ENCODE measurements at regions of chr1 and their contacts with region 1.

Region 1: DNA sequence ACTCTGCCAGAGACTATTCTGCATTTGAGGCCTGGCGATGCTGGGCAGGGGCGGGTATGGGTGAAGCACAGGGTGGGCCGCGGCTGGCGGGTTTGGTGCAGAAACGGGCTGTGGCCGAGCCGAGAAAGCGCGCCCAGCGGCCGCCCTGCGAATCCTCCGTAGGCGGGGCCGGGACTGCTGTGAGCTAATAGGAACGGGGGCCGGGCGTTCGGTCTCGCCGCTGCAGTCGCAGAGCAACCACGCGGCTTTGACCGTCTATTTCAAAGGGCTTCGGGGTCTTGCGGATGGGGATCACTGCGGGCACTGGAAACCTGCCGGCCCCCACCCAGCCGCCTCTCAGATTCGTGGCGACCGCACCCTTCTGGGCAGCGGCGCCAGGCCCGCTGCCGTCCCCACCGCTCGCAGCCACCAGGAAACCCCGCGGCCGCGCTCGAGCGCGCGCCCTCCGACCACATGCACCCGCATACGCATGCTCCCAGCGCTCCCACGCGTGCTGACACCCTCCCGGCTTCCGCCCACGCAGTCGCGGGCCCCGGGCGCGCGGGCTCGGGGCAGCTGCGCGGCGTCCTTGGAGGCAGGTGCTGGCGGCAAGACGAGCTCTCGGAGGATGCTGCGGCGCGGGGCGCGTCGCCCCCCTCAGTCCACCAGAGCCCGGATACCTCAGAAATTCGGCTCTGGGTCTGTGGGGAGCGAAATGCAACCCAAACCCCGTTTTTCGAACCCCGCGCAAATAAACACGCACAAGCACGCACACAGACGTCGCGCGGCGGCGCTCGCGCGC is 32.6 kb downstream of the DNTTIP2 start:
- DNase-seq: peak; percentile 79
- H3K4me3 Mint-ChIP-seq: peak overlapping the region; percentile 83
- H3K27ac Mint-ChIP-seq: peak overlapping the region; percentile 83
- H3K4me1 Mint-ChIP-seq: peaks cover 23% of the 10 kb centered on the region
- H3K27me3 Mint-ChIP-seq: no peaks in the 10 kb centered on the region

Region 2: DNA sequence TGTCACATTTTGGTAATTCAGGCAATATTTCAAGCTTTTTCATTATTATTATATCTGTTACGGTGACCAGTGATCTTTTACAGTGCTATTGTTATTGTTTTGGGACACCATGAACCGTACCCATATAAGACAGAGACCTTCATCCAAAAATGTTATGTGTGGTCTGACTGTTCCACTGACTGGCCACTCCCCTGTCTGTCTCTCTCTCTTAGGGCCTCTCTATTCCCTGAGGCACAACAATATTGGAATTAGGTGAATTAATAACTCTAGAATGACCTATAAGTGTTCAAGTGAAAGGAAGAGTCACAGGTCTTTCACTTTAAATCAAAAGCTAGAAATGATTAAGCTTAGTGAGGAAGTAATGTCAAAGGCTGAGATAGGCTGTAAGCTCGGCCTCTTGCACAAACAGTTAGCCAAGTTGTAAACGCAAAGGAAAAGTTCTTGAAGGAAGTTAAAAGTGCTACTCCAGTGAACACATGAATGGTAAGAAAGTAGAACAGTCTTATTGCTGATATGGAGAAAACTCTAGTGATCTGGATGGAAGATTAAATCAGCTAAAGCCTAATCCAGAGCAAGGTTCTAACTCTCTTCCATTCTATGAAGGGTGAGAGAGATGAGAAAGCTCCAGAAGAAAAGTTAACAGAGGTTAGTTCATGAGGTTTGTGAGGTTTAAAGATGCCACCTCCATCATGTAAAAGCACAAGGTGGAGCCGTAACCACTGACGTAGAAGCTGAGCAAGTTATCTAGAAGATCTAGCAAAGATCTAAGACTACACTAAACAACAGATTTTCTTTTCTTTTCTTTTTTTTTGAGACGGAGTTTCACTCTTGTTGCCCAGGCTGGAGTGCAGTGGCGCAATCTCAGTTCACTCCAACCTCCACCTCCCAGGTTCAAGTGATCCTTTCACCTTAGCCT is 865.4 kb before region 1 on chr1:
- intact Hi-C with region 1: loop called (anchors 10 kb)
- DNase-seq: peak; percentile 45
- H3K4me3 Mint-ChIP-seq: peak overlapping the region; percentile 41
- H3K27ac Mint-ChIP-seq: peak overlapping the region; percentile 98
- H3K4me1 Mint-ChIP-seq: peaks cover 55% of the 10 kb centered on the region
- H3K27me3 Mint-ChIP-seq: no peaks in the 10 kb centered on the region

Region 3: GRCh38 chr1:93033785-93034184 is 812.6 kb before region 1 on chr1:
- intact Hi-C with region 1: no loop called
- DNase-seq: no peak
- H3K4me3 Mint-ChIP-seq: no peak overlapping the region
- H3K27ac Mint-ChIP-seq: no peak overlapping the region
- H3K4me1 Mint-ChIP-seq: peaks cover 34% of the 10 kb centered on the region
- H3K27me3 Mint-ChIP-seq: no peaks in the 10 kb centered on the region

Region 4: GRCh38 chr1:93304716-93305138 is 541.7 kb before region 1 on chr1:
- intact Hi-C with region 1: loop called (anchors 10 kb)
- DNase-seq: peak; percentile 13
- H3K4me3 Mint-ChIP-seq: no peak overlapping the region
- H3K27ac Mint-ChIP-seq: no peak overlapping the region
- H3K4me1 Mint-ChIP-seq: no peaks in the 10 kb centered on the region
- H3K27me3 Mint-ChIP-seq: no peaks in the 10 kb centered on the region

Region 5: DNA sequence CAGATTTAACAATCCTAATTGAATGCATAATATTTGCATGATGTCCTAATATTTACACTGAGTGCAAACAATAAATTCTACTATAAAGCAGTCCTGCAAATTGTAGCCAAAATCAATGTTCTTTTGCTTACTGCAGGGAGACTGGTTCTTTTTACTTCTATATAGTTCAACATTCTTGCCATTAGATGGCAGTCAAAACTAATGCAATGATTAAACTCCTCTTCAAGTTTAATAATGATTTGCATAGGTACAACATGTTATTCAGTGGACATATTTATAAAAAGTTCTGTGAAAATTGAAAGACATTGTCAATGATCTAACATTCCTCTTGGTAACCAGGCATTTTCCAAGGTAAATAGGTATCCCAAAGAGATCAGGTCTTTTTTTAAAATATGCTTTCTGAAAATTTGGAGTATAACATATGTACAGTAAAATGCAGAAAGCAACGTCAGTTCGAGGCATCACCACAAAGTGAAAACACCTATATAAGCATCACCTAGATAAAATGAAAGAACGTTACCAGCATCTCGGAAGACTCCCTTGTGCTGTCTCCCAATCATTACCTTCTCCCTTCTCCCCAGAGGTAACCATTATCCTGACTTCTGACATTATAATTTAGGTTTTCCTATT is 408.3 kb before region 1 on chr1:
- intact Hi-C with region 1: loop called (anchors 5 kb)
- DNase-seq: no peak
- H3K4me3 Mint-ChIP-seq: no peak overlapping the region
- H3K27ac Mint-ChIP-seq: no peak overlapping the region
- H3K4me1 Mint-ChIP-seq: peaks cover 2% of the 10 kb centered on the region
- H3K27me3 Mint-ChIP-seq: peaks cover 23% of the 10 kb centered on the region

Region 6: DNA sequence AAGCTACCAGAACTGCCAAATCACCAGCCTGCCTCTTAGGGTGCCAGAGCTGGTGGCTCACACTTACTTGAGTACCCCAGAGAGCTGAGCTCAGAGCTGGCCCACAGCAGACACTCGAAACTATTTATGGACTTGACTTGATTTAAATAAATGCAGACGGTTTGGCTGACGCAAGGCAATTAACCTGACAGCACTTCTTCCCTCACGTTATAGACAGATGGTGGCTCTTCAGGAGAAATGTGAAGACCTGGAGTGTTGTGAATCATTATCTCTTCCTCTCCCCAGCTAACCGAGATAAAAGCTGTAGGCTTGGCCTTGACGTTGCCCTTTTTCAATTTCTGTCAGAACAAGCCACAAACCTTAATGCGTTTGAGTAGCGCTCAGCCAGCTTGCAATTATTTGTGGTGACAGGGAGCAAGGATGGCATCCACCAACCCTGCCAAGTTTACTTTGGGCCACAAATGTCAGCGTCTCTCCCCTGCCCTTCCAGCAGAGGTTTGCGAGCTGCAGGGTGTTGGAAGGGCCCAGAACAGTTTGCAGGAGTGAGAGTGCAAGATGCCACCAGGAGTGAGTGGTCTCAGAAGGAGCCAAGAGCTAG is 130.8 kb before region 1 on chr1:
- intact Hi-C with region 1: loop called (anchors 2 kb)
- DNase-seq: peak; percentile 48
- H3K4me3 Mint-ChIP-seq: peak overlapping the region; percentile 47
- H3K27ac Mint-ChIP-seq: peak overlapping the region; percentile 78
- H3K4me1 Mint-ChIP-seq: peaks cover 61% of the 10 kb centered on the region
- H3K27me3 Mint-ChIP-seq: no peaks in the 10 kb centered on the region

Region 7: DNA sequence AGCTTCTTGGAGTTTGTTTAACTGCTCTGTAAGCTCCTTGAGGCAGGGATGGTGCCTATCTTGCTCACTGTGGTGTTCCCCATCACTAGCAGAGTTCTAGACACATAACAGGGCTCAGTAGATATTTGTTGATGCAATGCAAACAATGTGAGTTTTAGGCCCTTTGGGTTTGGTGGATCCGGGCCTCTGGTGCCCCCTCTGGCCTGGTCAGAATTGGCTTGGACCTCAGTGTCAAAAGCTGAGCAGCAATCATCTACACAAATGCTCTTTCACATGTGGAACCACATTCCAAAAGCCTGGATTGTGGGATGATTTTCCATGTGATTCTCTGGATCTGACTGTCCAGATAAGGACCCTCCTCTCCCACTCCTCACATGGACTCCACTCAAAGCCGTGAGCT is 111.4 kb before region 1 on chr1:
- intact Hi-C with region 1: no loop called
- DNase-seq: no peak
- H3K4me3 Mint-ChIP-seq: no peak overlapping the region
- H3K27ac Mint-ChIP-seq: no peak overlapping the region
- H3K4me1 Mint-ChIP-seq: peaks cover 2% of the 10 kb centered on the region
- H3K27me3 Mint-ChIP-seq: peaks cover 3% of the 10 kb centered on the region

Region 8: GRCh38 chr1:93878889-93879586 is 32.6 kb after region 1 on chr1 and contains the start of gene DNTTIP2:
- intact Hi-C with region 1: loop called (anchors 1 kb)
- DNase-seq: peak; percentile 86
- H3K4me3 Mint-ChIP-seq: peak within 1 kb of the TSS; percentile 94
- H3K27ac Mint-ChIP-seq: peak within 1 kb of the TSS; percentile 97
- H3K4me1 Mint-ChIP-seq: peaks cover 32% of the 10 kb centered on the region
- H3K27me3 Mint-ChIP-seq: no peaks in the 10 kb centered on the region
- total RNA-seq, gene DNTTIP2: 80.7 and 85.5 TPM in 2 replicates